Posterior vena cava (tissue), 2 donors: ENCODE measurements at regions of chr4 and their contacts with region 1.

Region 1: GRCh38 chr4:38902695-38903094 is 35.1 kb downstream of the FAM114A1 start:
- DNase-seq: no peak

Region 2: GRCh38 chr4:38710053-38710452 is 192.6 kb before region 1 on chr4:
- intact Hi-C with region 1: no loop called
- DNase-seq: no peak

Region 3: GRCh38 chr4:39134683-39135319 is 232.1 kb after region 1 on chr4:
- intact Hi-C with region 1: loop called in 1 of 2 experiments (anchors 10 kb)
- DNase-seq: no peak